OCI-LY7 (cell line): ENCODE measurements at regions of chr15 and their contacts with region 1.

Region 1: GRCh38 chr15:100923902-100924301 is 4.7 kb downstream of the LRRK1 start:
- DNase-seq: no peak
- H3K4me3 ChIP-seq: peak overlapping the region; percentile 91
- H3K27ac ChIP-seq: peak overlapping the region; percentile 99
- H3K4me1 ChIP-seq: peaks cover 82% of the 10 kb centered on the region
- CTCF ChIP-seq: no peak

Region 2: GRCh38 chr15:100759698-100760356 is 164.1 kb before region 1 on chr15:
- CTCF ChIA-PET with region 1: no interaction called
- POLR2A ChIA-PET with region 1: no interaction called
- intact Hi-C with region 1: no loop called
- DNase-seq: no peak
- H3K4me3 ChIP-seq: no peak overlapping the region
- H3K27ac ChIP-seq: no peak overlapping the region
- H3K4me1 ChIP-seq: no peaks in the 10 kb centered on the region
- CTCF ChIP-seq: no peak

Region 3: DNA sequence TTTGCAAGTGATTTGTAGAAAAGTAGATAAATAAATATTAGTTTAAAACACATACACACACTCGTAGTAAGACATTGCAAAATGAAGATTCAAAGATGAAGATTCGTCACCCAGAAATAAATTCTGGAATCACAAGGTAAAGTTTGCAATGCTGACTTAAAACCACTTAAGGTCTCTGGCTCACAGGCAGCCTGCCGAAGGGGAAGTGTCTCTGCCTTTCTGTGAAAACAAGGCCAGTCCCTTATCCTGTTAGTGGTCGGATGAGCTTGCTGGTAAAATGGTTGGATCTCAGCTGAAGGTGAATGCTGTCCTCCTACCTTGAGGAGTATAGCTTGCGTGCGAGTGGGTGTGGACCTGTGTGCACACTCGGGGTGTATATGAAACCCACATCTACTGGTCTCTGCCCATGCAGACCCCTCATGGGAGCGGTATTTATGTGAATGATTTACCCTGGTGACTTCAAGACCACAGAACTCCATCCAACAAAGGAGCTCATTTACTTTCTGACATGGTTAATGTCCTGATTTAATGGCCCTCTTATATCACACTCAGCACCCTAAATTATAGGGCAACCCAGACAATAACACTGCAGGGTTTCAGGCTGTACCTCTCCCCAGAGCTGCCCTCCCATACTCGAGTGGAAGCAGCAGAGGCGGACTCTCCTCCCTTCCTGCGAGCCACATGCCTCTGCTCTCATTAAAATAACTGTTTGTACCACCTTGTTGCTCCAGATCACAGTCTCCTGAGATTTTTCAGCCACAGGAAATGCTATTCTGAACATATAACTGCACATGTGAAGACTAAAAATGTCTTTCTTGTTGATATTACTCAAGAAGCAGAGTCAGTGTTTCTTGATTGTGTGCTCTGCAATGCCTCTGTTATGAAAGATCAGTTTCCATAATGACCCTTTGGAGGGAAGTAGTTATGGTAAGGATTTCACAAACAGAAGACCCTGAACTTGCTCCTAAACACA is 90.2 kb before region 1 on chr15:
- CTCF ChIA-PET with region 1: no interaction called
- POLR2A ChIA-PET with region 1: no interaction called
- intact Hi-C with region 1: no loop called
- DNase-seq: peak; percentile 8
- H3K4me3 ChIP-seq: no peak overlapping the region
- H3K27ac ChIP-seq: no peak overlapping the region
- H3K4me1 ChIP-seq: peaks cover 16% of the 10 kb centered on the region
- CTCF ChIP-seq: no peak

Region 4: GRCh38 chr15:100934726-100935125 is 10.8 kb after region 1 on chr15:
- CTCF ChIA-PET with region 1: interaction called, 6 read pairs
- POLR2A ChIA-PET with region 1: interaction called, 134 read pairs
- intact Hi-C with region 1: loop called (anchors 1 kb)
- DNase-seq: peak; percentile 80
- H3K4me3 ChIP-seq: peak overlapping the region; percentile 20
- H3K27ac ChIP-seq: peak overlapping the region; percentile 99
- H3K4me1 ChIP-seq: peaks cover 95% of the 10 kb centered on the region
- CTCF ChIP-seq: peak; percentile 68